ENCODE measurements at regions of chr19 and their contacts with region 1.

Region 1: GRCh38 chr19:10194500-10195289 is at the start of gene DNMT1:
- DNase-seq: peak; percentile 96
- H3K4me3 ChIP-seq: peak within 1 kb of the TSS; percentile 72 to 87 (median 78)
- H3K27ac ChIP-seq: peak within 1 kb of the TSS; percentile 88 to 96 (median 92)
- H3K4me1 ChIP-seq: peaks cover 10 to 20% (median 15%) of the 10 kb centered on the region in 4 donors
- H3K27me3 ChIP-seq: no peaks in the 10 kb centered on the region
- CTCF ChIP-seq: peak in 1 of 5 experiments; percentile 11
- EP300 ChIP-seq: no peak
- POLR2A ChIP-seq: peak; percentile 74
- total RNA-seq, gene DNMT1: 23.3 to 122 (median 42.0) TPM

Region 2: GRCh38 chr19:10168386-10168948 is 26.2 kb before region 1 on chr19:
- in situ Hi-C with region 1: no loop called
- intact Hi-C with region 1: no loop called
- DNase-seq: no peak
- H3K4me3 ChIP-seq: no peak overlapping the region
- H3K27ac ChIP-seq: no peak overlapping the region
- H3K4me1 ChIP-seq: no peaks in the 10 kb centered on the region
- H3K27me3 ChIP-seq: no peaks in the 10 kb centered on the region
- CTCF ChIP-seq: no peak
- EP300 ChIP-seq: no peak
- POLR2A ChIP-seq: no peak

Region 3: DNA sequence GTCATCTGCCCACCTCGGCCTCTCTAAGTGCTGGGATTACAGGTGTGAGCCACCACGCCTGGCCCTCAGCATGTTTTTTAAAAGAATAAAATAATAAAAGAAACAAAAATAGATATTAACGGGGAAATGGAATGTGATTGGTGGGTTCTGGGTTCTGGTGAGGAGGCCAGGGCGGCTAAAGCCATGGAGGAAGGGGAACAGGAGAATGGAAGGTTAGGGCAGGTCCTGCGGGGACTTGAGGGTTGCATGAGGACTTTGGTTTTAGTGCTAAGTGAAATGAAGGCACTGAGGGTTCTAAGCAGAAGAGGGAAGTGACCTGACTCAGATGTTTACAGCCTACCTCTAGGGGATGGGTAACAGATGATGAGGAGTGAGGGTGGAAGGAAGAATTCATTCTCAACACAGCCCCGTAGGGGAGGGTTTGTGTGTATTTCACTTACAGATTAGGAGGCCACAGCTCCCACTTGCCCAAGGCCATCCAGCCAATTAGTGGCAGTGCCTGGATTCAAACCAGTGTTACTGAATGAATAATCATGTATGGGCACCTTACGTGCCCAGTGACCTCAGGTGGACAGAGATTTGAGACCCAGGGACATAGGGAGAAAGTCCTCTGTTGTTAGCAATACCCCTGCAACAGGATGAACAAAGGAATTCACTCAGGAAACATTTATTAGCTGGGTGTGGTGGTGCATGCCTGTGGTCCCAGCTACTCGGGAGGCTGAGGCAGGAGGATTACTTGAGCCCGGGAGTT is 50.7 kb after region 1 on chr19:
- in situ Hi-C with region 1: loop called in 1 of 4 experiments (anchors 10 kb)
- intact Hi-C with region 1: no loop called
- DNase-seq: no peak
- H3K4me3 ChIP-seq: no peak overlapping the region
- H3K27ac ChIP-seq: no peak overlapping the region
- H3K4me1 ChIP-seq: peaks cover 0 to 6% (median 4%) of the 10 kb centered on the region in 4 donors
- H3K27me3 ChIP-seq: no peaks in the 10 kb centered on the region
- CTCF ChIP-seq: no peak
- EP300 ChIP-seq: no peak
- POLR2A ChIP-seq: no peak

Region 4: GRCh38 chr19:10543420-10544241 is 348.9 kb after region 1 on chr19 and contains the start of gene ATG4D:
- in situ Hi-C with region 1: no loop called
- intact Hi-C with region 1: no loop called
- DNase-seq: peak; percentile 94
- H3K4me3 ChIP-seq: peak within 1 kb of the TSS; percentile 82 to 99 (median 94)
- H3K27ac ChIP-seq: peak within 1 kb of the TSS; percentile 92 to 98 (median 96)
- H3K4me1 ChIP-seq: peaks cover 4 to 25% (median 17%) of the 10 kb centered on the region in 4 donors
- H3K27me3 ChIP-seq: peaks cover 8% of the 10 kb centered on the region
- CTCF ChIP-seq: no peak
- EP300 ChIP-seq: no peak
- POLR2A ChIP-seq: peak; percentile 77
- total RNA-seq, gene ATG4D: 79.9 to 164 (median 100) TPM

Region 5: GRCh38 chr19:10644260-10645007 is 449.7 kb after region 1 on chr19:
- in situ Hi-C with region 1: no loop called
- intact Hi-C with region 1: no loop called
- DNase-seq: peak; percentile 90
- H3K4me3 ChIP-seq: no peak overlapping the region
- H3K27ac ChIP-seq: peak overlapping the region in 3 of 4 donors; percentile 19 to 51 (median 29)
- H3K4me1 ChIP-seq: peaks cover 0 to 9% (median 4%) of the 10 kb centered on the region in 4 donors
- H3K27me3 ChIP-seq: no peaks in the 10 kb centered on the region
- CTCF ChIP-seq: peak; percentile 83 to 96 (median 85)
- EP300 ChIP-seq: no peak
- POLR2A ChIP-seq: peak; percentile 8

Measured in transverse colon (tissue), 4 donors.